ENCODE measurements at regions of chr7 and their contacts with region 1.

Region 1: GRCh38 chr7:55887821-55888247 is 578 bp downstream of the ZNF713 start:
- DNase-seq: no peak
- H3K4me3 Mint-ChIP-seq: peak overlapping the region; percentile 87
- H3K27ac Mint-ChIP-seq: peak overlapping the region; percentile 84
- H3K4me1 Mint-ChIP-seq: peaks cover 5% of the 10 kb centered on the region
- H3K27me3 Mint-ChIP-seq: peaks cover 2% of the 10 kb centered on the region

Region 2: DNA sequence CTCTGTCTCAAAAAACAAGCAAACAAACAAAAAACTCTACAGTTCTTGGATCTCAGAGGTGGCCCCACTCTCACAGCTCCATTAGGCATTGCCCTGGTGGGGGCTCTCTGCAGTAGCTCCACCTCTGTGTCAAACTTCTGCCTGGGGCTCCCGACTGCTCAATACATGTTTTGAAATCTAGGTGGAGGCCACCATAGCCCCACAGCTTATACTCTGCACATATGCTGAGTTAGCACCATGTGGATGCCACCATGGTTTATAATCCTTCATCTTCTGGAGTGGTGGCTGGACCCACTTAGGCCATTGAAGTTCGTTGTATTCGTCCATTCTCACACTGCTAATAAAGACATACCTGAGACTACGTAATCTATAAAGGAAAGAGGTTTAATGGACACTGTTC is 103.7 kb before region 1 on chr7:
- intact Hi-C with region 1: no loop called
- DNase-seq: no peak
- H3K4me3 Mint-ChIP-seq: no peak overlapping the region
- H3K27ac Mint-ChIP-seq: no peak overlapping the region
- H3K4me1 Mint-ChIP-seq: no peaks in the 10 kb centered on the region
- H3K27me3 Mint-ChIP-seq: no peaks in the 10 kb centered on the region

Region 3: DNA sequence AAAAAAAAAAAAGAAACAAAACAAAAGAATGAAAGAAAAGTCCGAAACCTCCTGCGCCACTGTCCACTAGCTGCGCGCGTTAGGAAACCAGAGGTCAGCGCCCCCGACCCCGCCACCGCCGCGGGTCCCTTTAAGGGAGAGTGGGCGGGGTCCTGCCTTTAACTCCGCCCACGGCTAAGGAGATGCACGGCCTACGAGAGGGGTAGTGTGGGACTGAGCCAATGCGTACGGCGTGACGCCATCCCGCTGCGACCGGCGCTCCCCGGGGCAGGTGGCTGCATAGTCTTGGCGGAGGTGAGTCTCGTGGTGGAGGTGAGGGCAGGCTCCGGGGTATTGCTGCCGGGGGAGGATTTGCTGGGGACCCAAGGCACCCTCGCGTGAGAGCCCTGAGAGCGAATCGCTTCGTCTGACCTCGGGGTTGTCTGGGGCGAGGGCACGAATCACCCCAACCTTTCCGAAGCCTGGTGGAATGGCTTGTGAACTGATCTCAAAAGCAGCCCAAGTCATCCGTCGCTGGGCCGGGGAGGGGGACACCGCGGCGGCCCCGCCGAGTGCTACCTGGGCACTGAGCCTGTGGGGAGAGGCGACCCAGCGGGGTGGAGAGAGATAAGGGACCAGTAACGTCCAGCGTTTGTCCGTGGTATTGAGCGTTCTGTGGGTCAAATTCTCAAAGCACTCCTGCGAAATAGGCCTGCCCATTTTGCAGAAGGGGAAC is 64.0 kb after region 1 on chr7 and contains the start of gene MRPS17:
- intact Hi-C with region 1: loop called (anchors 1 kb)
- DNase-seq: peak; percentile 92
- H3K4me3 Mint-ChIP-seq: peak within 1 kb of the TSS; percentile 92
- H3K27ac Mint-ChIP-seq: peak within 1 kb of the TSS; percentile 92
- H3K4me1 Mint-ChIP-seq: peaks cover 10% of the 10 kb centered on the region
- H3K27me3 Mint-ChIP-seq: no peaks in the 10 kb centered on the region
- total RNA-seq, gene MRPS17: 38.2 and 39.3 TPM in 2 replicates

Region 4: DNA sequence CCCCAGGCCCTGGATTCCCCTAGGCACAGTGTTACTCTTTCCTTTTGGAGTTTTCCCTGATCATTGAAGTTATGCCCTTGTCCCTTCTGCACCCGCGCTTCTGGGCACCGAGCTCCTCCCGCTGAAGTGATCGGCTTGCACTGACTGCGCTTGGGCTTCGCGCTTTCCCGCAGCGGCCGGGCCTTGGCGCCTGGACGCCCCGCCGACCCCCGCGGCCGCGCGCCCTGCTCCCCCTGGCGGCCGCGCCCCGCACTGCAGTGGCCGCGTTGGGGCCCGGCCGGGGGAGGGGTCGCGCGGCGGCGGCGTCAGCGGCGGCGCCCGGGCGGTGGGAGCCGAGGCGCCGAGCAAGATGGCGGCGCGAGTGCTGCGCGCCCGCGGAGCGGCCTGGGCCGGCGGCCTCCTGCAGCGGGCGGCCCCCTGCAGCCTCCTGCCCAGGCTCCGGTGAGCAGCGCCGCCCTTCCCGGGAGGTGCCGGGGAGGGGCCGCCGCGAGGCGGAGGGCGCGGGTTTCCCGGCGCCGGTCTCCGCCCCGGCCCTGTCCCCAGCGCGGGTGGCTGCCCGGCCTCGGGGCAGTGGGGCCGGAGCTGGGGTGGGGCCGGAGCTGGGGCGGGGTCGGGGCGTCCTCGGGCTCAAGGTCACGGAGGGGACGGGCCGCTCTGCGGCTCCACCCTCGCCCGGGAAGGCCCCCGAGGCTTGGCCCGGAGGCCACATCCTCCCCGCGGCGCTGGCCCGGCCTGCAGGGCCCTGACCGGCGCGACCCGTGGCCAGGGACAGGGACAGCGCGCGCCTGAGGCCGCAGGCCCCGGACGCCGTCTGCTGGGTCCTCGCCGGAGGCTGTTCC is 76.6 kb after region 1 on chr7 and contains the start of gene NIPSNAP2:
- intact Hi-C with region 1: loop called (anchors 1 kb)
- DNase-seq: peak; percentile 55
- H3K4me3 Mint-ChIP-seq: peak within 1 kb of the TSS; percentile 88
- H3K27ac Mint-ChIP-seq: peak within 1 kb of the TSS; percentile 89
- H3K4me1 Mint-ChIP-seq: peaks cover 26% of the 10 kb centered on the region
- H3K27me3 Mint-ChIP-seq: no peaks in the 10 kb centered on the region
- total RNA-seq, gene NIPSNAP2: 49.4 and 50.0 TPM in 2 replicates